ENCODE measurements at regions of chr1 and their contacts with region 1.

Region 1: GRCh38 chr1:35451125-35451528 is 106.1 kb downstream of the KIAA0319L start:
- DNase-seq: peak; percentile 19 to 88
- H3K4me3 ChIP-seq: no peak overlapping the region
- H3K27ac ChIP-seq: no peak overlapping the region
- H3K4me1 ChIP-seq: peaks cover 9 to 16% of the 10 kb centered on the region in 2 donors
- H3K27me3 ChIP-seq: no peaks in the 10 kb centered on the region
- CTCF ChIP-seq: peak; percentile 75 to 88 (median 85)

Region 2: DNA sequence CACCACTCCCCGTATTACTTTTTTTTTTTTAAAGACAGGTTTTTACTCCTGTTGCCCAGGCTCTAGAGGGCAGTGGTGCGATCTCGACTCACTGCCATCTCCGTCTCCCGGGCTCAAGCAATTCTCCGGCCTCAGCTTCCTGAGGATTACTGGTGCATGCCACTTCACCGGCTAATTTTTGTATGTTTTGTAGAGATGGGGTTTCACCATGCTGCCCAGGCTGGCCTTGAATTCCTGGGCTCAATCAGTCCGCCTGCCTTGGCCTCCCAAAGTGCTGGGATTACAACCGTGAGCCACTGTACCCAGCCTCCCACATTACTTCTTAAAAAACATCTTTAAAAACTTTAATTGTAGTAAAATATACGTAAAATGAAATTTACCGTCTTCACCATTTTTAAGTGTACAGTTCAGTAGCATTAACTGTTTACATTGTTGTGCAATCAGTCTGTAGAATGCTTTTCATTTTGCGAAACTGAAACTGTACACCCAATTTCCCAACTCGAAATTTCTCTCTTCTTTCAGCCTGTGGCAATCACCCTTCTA is 105.6 kb before region 1 on chr1:
- intact Hi-C with region 1: no loop called
- DNase-seq: no peak
- H3K4me3 ChIP-seq: no peak overlapping the region
- H3K27ac ChIP-seq: no peak overlapping the region
- H3K4me1 ChIP-seq: no peaks in the 10 kb centered on the region
- H3K27me3 ChIP-seq: no peaks in the 10 kb centered on the region
- CTCF ChIP-seq: no peak

Region 3: DNA sequence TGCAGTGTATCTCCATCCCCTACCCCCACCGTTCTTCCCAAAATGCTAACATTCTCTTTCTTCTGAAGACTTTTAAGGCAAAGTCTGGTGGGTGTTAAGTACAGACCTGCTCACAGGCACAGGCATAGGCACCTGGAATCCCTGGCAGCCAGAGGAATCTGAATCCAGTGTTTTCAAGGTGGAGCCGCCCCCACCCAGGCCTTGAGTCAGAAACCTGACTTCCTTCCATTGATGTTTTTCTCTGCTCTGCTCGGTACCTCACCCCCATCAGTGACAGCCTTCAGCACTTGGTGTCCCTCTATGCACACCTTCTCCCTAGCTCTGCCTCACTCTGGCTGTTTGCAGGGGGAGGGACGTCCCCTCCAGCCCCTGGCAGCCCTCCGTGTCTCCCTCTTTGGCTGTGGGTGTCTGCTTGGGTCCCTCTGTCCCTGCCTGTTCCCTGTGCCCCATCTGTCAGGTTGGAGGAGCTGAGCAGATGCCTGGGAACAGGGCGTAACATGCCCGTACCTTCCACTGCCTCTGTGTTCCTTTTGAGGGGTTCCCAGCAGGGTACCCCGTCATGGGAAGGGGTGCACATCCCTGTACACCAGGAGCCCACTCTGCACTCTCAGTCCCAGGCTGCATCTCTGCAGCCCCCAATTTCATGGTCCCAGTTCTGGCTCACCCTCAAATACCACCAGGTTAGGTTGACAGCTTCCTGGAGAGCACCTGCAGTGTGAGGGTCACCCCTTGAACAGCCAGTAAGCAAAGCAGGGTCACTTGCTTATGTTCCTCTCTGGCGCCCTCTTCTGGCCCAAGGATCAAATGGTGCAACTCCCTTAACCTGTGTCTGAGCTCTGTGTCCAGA is 113.1 kb after region 1 on chr1:
- intact Hi-C with region 1: loop called (anchors 1 kb)
- DNase-seq: peak in 1 of 2 donors; percentile 83
- H3K4me3 ChIP-seq: no peak overlapping the region
- H3K27ac ChIP-seq: no peak overlapping the region
- H3K4me1 ChIP-seq: peaks cover 2 to 16% of the 10 kb centered on the region in 2 donors
- H3K27me3 ChIP-seq: no peaks in the 10 kb centered on the region
- CTCF ChIP-seq: peak; percentile 38 to 77 (median 69)

Region 4: DNA sequence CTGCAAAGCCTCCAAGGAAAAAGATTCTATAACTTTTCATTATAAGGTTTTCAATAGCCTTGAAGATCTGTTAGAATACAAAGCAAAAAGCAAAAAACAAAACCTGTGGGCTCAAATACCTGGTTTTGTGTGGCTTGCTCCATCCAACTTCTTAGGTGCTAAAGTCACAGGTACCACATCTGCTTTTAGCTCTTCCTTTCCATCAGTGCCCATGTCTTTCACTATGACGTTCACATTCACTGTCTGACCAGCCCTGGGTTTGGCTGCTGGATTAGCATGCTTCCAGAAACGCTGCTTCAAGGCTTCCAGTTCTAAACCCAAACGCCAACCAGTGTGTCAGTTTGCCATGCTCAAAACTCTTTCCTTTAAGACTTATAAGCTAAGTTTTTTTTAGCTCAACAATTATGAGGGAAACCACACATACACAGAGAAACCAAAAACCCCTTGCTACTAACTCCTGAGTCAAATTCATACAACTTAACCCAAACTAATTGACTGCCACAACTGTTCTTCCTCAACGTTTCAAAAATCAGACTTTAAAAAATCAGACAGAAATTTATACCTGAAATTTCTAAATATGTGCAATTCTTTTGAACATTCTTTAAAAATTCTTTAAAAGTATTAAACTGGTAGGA is 302.6 kb after region 1 on chr1:
- intact Hi-C with region 1: no loop called
- DNase-seq: no peak
- H3K4me3 ChIP-seq: no peak overlapping the region
- H3K27ac ChIP-seq: no peak overlapping the region
- H3K4me1 ChIP-seq: no peaks in the 10 kb centered on the region
- H3K27me3 ChIP-seq: no peaks in the 10 kb centered on the region
- CTCF ChIP-seq: no peak

Measured in ascending aorta (tissue), 2 donors.